ENCODE measurements at regions of chr2 and their contacts with region 1.

Region 1: DNA sequence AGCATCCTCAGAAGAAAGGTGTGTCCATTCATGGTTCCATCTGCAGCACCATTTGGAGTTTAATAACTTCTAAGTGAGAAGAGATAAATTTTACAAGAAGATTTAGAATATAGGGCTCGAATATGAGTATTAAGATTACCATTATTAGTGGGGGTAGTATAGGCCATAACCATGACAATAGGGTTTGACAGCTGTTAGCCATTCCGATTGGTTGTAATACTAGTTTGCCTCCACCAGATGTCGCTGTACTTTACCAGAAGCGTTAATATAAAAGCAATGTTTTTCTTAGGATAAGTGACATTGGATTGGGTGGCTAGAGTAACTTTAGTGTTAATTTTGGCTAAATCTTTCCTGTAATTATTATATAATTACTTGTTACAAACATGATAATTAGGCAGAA is 107.5 kb upstream of the SRD5A2 start:
- DNase-seq: peak; percentile 12
- H3K4me3 ChIP-seq: no peak overlapping the region
- H3K27ac ChIP-seq: no peak overlapping the region
- H3K4me1 ChIP-seq: no peaks in the 10 kb centered on the region
- H3K27me3 ChIP-seq: no peaks in the 10 kb centered on the region
- CTCF ChIP-seq: peak; percentile 61

Region 2: DNA sequence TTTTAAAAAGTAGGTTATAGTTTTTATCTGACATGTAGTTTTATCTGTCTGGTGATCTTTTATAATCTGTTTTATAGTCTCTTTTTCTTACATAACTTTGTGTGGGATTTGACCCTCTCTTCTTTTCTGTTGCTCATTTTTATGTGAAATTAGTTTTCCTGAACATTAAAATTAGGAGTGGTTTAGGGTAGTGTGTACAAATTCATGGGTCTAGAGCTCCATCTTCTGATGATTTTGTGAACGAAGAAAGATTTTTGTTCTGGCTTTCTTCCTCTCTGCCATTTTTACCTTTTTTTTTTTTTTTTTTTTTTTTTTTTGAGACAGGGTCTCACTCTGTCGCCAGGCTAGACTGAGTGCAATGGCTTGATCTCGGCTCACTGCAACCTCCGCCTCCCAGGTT is 524.0 kb after region 1 on chr2:
- CTCF ChIA-PET with region 1: interaction called, 16 read pairs
- POLR2A ChIA-PET with region 1: no interaction called
- intact Hi-C with region 1: no loop called
- DNase-seq: no peak
- H3K4me3 ChIP-seq: no peak overlapping the region
- H3K27ac ChIP-seq: no peak overlapping the region
- H3K4me1 ChIP-seq: no peaks in the 10 kb centered on the region
- H3K27me3 ChIP-seq: no peaks in the 10 kb centered on the region
- CTCF ChIP-seq: no peak

Measured in A673 (cell line).